Activated CD8-positive, alpha-beta T cell treated with anti-CD3 and anti-CD28 coated beads, Interleukin-2, amount 10 ng/mL, durations not matched to agents 7 days and 5 days (primary cell): ENCODE measurements at regions of chr13 and their contacts with region 1.

Region 1: GRCh38 chr13:45393941-45394570 is 24.1 kb downstream of the SLC25A30 start:
- DNase-seq: peak; percentile 58
- ATAC-seq: no peak
- H3K4me3 Mint-ChIP-seq: no peak overlapping the region
- H3K27ac Mint-ChIP-seq: peak overlapping the region; percentile 24
- H3K4me1 Mint-ChIP-seq: peaks cover 46% of the 10 kb centered on the region
- H3K27me3 Mint-ChIP-seq: no peaks in the 10 kb centered on the region

Region 2: GRCh38 chr13:45412274-45413049 is 18.4 kb after region 1 on chr13:
- CTCF ChIA-PET with region 1: interaction called, 30 read pairs
- POLR2A ChIA-PET with region 1: interaction called, 19 read pairs
- DNase-seq: peak; percentile 9
- ATAC-seq: no peak
- H3K4me3 Mint-ChIP-seq: no peak overlapping the region
- H3K27ac Mint-ChIP-seq: no peak overlapping the region
- H3K4me1 Mint-ChIP-seq: peaks cover 16% of the 10 kb centered on the region
- H3K27me3 Mint-ChIP-seq: no peaks in the 10 kb centered on the region

Region 3: GRCh38 chr13:45417790-45418534 is 23.9 kb after region 1 on chr13 and contains the start of gene SLC25A30:
- CTCF ChIA-PET with region 1: interaction called, 30 read pairs
- POLR2A ChIA-PET with region 1: interaction called, 19 read pairs
- DNase-seq: peak; percentile 94
- ATAC-seq: peak; percentile 95
- H3K4me3 Mint-ChIP-seq: peak within 1 kb of the TSS; percentile 91
- H3K27ac Mint-ChIP-seq: peak within 1 kb of the TSS; percentile 95
- H3K4me1 Mint-ChIP-seq: peaks cover 13% of the 10 kb centered on the region
- H3K27me3 Mint-ChIP-seq: no peaks in the 10 kb centered on the region
- total RNA-seq, gene SLC25A30: 19.0 to 19.7 TPM